ENCODE measurements at regions of chr3 and their contacts with region 1.

Region 1: DNA sequence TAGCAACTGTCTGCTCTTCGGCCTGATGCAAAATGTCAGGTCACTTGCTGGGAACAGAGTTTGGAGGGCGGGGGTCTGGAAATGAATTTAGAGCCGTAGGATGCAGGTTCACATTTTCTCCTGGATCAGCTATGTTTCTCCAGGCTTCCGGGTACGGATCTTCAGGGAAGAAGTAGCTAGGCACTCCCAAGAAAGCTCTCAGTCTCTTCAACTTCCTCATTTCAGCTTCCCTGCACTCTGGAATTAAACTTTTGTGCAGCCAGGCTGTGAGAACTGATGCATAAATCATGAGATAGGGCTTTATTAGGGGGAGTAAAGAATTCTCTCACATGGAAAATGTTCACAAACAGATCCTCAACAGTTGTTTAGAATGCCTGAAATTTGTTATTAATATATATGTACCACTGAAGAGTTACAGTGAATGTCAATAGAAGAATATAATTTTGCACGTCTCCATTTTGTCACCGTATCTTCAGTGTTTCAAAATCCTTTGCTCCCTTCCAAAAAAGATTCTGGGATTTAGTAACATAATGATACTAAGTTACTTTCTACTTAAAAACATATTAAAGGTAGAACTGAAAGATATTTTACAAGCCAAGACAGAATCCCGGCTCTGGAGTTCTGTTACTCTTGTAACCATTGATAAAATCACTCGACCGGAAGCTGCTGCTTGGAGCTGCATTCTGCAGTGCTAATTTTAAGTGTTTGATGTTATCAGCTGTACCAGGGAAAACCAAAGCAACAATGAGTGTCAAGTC is 178.5 kb upstream of the P2RY1 start:
- DNase-seq: no peak
- ATAC-seq: no peak

Region 2: GRCh38 chr3:152511904-152512303 is 144.5 kb before region 1 on chr3:
- intact Hi-C with region 1: loop called (anchors 5 kb)
- DNase-seq: no peak
- ATAC-seq: no peak